Endothelial cell of umbilical vein (primary cell): ENCODE measurements at regions of chr1 and their contacts with region 1.

Region 1: DNA sequence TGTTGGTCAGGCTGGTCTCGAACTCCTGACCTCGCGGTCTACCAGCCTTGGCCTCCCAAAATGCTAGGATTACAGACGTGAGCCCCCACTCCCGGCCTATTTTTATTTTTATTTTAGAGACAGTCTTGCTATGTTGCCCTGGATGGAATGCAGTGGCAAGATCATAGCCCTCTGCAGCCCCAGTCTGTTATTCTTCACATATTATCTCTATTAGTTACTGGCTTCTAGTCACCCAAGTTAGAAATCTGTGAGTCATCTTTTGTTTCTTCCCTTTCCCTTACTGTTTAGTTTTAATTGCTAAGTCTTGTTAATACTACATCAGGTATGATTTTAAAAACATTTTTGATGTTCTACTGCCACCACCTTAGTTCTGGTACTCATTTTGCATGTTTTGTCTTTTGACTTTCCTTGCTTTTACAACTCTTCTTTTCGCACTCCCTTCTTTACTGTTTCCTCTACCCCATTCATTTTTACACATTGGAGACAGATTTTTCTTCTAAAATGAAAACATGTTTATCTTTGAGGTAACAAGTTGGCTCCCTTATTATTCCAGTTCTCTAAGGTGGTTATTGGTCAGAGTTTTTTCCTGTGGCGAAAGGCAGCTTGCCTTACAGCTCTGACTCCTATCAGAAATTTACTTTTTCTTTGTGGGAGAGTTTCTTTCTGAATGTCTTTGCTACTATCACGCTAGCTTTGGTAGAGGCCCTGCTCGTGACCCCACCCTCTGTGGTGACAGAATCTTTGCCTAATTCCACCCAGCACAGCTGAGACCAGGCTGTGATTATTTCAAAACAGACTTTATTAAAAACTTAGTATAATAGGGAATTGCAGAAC is 19.5 kb downstream of the ZMYM4 start:
- DNase-seq: peak; percentile 78
- H3K4me3 ChIP-seq: peak overlapping the region in 1 of 3 experiments; percentile 45
- H3K27ac ChIP-seq: peak overlapping the region; percentile 83
- H3K4me1 ChIP-seq: peaks cover 28% of the 10 kb centered on the region
- H3K27me3 ChIP-seq: no peaks in the 10 kb centered on the region
- CTCF ChIP-seq: no peak
- POLR2A ChIP-seq: no peak

Region 2: GRCh38 chr1:35243691-35244090 is 44.3 kb before region 1 on chr1:
- CTCF ChIA-PET with region 1: no interaction called
- POLR2A ChIA-PET with region 1: no interaction called
- dilution Hi-C with region 1: no loop called
- intact Hi-C with region 1: no loop called
- DNase-seq: no peak
- H3K4me3 ChIP-seq: no peak overlapping the region
- H3K27ac ChIP-seq: no peak overlapping the region
- H3K4me1 ChIP-seq: no peaks in the 10 kb centered on the region
- H3K27me3 ChIP-seq: peaks cover 0 to 1% of the 10 kb centered on the region in 2 experiments
- CTCF ChIP-seq: no peak
- POLR2A ChIP-seq: no peak

Region 3: GRCh38 chr1:35268282-35269200 is 19.5 kb before region 1 on chr1 and contains the start of gene ZMYM4:
- CTCF ChIA-PET with region 1: interaction called, 3 read pairs
- POLR2A ChIA-PET with region 1: no interaction called
- dilution Hi-C with region 1: no loop called
- intact Hi-C with region 1: loop called (anchors 1 kb)
- DNase-seq: peak; percentile 98
- H3K4me3 ChIP-seq: peak within 1 kb of the TSS; percentile 61 to 99 (median 84)
- H3K27ac ChIP-seq: peak within 1 kb of the TSS; percentile 47
- H3K4me1 ChIP-seq: peaks cover 5% of the 10 kb centered on the region
- H3K27me3 ChIP-seq: peaks cover 0 to 2% of the 10 kb centered on the region in 2 experiments
- CTCF ChIP-seq: no peak
- POLR2A ChIP-seq: no peak
- total RNA-seq, gene ZMYM4: 61.2 and 65.0 TPM in 2 replicates

Region 4: GRCh38 chr1:35470977-35471613 is 183.1 kb after region 1 on chr1:
- CTCF ChIA-PET with region 1: no interaction called
- POLR2A ChIA-PET with region 1: no interaction called
- dilution Hi-C with region 1: no loop called
- intact Hi-C with region 1: no loop called
- DNase-seq: no peak
- H3K4me3 ChIP-seq: no peak overlapping the region
- H3K27ac ChIP-seq: no peak overlapping the region
- H3K4me1 ChIP-seq: peaks cover 5% of the 10 kb centered on the region
- H3K27me3 ChIP-seq: no peaks in the 10 kb centered on the region
- CTCF ChIP-seq: no peak
- POLR2A ChIP-seq: no peak

Region 5: GRCh38 chr1:35557292-35558063 is 269.5 kb after region 1 on chr1 and contains the starts of genes KIAA0319L and NCDN:
- CTCF ChIA-PET with region 1: no interaction called
- POLR2A ChIA-PET with region 1: no interaction called
- dilution Hi-C with region 1: no loop called
- intact Hi-C with region 1: loop called (anchors 10 kb)
- DNase-seq: peak; percentile 97
- H3K4me3 ChIP-seq: peak within 1 kb of the TSS; percentile 46 to 59 (median 53)
- H3K27ac ChIP-seq: peak within 1 kb of the TSS; percentile 65
- H3K4me1 ChIP-seq: peaks cover 6% of the 10 kb centered on the region
- H3K27me3 ChIP-seq: no peaks in the 10 kb centered on the region
- CTCF ChIP-seq: no peak
- POLR2A ChIP-seq: peak; percentile 89
- total RNA-seq, gene KIAA0319L: 43.4 and 45.3 TPM in 2 replicates
- total RNA-seq, gene NCDN: 22.0 and 22.3 TPM in 2 replicates